PC-9 (cell line): ENCODE measurements at regions of chr14 and their contacts with region 1.

Region 1: GRCh38 chr14:93184388-93185353 is at the starts of genes LYSET and MOAP1:
- DNase-seq: peak; percentile 73 to 74
- H3K4me3 ChIP-seq: peak within 1 kb of the TSS; percentile 96
- H3K27ac ChIP-seq: peak within 1 kb of the TSS; percentile 82
- H3K4me1 ChIP-seq: peaks cover 26% of the 10 kb centered on the region
- H3K27me3 ChIP-seq: no peaks in the 10 kb centered on the region
- CTCF ChIP-seq: no peak; the same call in 1 of the 2 replicates
- total RNA-seq, gene LYSET: 9.5 and 14.3 TPM in 2 replicates
- total RNA-seq, gene MOAP1: 9.2 and 9.3 TPM in 2 replicates

Region 2: DNA sequence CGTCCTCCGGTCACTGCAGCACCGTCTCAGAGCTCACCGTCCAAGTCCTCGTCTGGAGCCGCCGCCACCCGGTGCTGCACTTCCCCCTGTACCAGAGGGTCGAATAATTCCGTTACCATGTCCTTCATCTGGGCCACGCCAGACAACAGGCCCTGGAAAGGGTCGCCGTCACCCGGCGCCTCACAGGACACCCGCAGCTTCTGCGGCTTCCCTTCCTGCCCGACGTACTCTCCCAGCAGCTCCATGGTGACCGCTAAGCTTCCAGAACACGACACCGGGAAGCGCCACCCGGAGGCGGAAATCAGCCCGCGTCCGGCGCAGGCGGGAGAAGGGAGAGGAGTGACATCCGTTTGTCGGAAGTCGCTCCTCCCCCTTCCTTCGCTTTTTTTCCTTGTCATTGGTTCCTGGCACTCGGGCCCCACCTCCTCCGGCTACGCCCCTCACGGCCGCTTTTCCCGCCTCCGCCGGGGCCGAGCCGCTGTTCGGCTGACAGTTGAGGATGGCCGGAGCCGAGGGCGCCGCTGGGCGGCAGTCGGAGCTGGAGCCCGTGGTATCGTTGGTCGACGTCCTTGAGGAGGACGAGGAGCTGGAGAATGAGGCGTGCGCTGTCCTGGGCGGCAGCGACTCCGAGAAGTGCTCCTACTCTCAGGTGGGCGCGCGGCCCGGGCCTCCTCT is 22.3 kb after region 1 on chr14 and contains the starts of genes GON7 and UBR7:
- CTCF ChIA-PET with region 1: no interaction called
- POLR2A ChIA-PET with region 1: no interaction called
- intact Hi-C with region 1: loop called (anchors 2 kb)
- DNase-seq: peak; percentile 92 to 93
- H3K4me3 ChIP-seq: peak within 1 kb of the TSS; percentile 100
- H3K27ac ChIP-seq: peak within 1 kb of the TSS; percentile 63
- H3K4me1 ChIP-seq: peaks cover 23% of the 10 kb centered on the region
- H3K27me3 ChIP-seq: no peaks in the 10 kb centered on the region
- CTCF ChIP-seq: no peak
- total RNA-seq, gene GON7: 6.4 and 9.3 TPM in 2 replicates
- total RNA-seq, gene UBR7: 9.3 and 14.3 TPM in 2 replicates